ENCODE measurements at regions of chr13 and their contacts with region 1.

Region 1: GRCh38 chr13:77751513-77752456 is 54.3 kb downstream of the SLAIN1 start:
- DNase-seq: peak; percentile 67
- H3K4me3 ChIP-seq: no peak overlapping the region
- H3K27ac ChIP-seq: no peak overlapping the region
- H3K4me1 ChIP-seq: no peaks in the 10 kb centered on the region
- CTCF ChIP-seq: peak; percentile 95

Region 2: GRCh38 chr13:77595166-77595810 is 156.5 kb before region 1 on chr13:
- CTCF ChIA-PET with region 1: no interaction called
- POLR2A ChIA-PET with region 1: no interaction called
- intact Hi-C with region 1: loop called (anchors 1 kb)
- DNase-seq: no peak
- H3K4me3 ChIP-seq: no peak overlapping the region
- H3K27ac ChIP-seq: no peak overlapping the region
- H3K4me1 ChIP-seq: no peaks in the 10 kb centered on the region
- CTCF ChIP-seq: no peak

Region 3: GRCh38 chr13:77697217-77698103 is 54.3 kb before region 1 on chr13 and contains the start of gene SLAIN1:
- CTCF ChIA-PET with region 1: no interaction called
- POLR2A ChIA-PET with region 1: interaction called, 3 read pairs
- intact Hi-C with region 1: loop called (anchors 5 kb)
- DNase-seq: peak; percentile 92
- H3K4me3 ChIP-seq: peak within 1 kb of the TSS; percentile 73
- H3K27ac ChIP-seq: peak within 1 kb of the TSS; percentile 24
- H3K4me1 ChIP-seq: peaks cover 29% of the 10 kb centered on the region
- CTCF ChIP-seq: no peak
- total RNA-seq, gene SLAIN1: 28.5 and 31.7 TPM in 2 replicates

Measured in OCI-LY7 (cell line).